Uterus (tissue), 4 donors: ENCODE measurements at regions of chr14 and their contacts with region 1.

Region 1: DNA sequence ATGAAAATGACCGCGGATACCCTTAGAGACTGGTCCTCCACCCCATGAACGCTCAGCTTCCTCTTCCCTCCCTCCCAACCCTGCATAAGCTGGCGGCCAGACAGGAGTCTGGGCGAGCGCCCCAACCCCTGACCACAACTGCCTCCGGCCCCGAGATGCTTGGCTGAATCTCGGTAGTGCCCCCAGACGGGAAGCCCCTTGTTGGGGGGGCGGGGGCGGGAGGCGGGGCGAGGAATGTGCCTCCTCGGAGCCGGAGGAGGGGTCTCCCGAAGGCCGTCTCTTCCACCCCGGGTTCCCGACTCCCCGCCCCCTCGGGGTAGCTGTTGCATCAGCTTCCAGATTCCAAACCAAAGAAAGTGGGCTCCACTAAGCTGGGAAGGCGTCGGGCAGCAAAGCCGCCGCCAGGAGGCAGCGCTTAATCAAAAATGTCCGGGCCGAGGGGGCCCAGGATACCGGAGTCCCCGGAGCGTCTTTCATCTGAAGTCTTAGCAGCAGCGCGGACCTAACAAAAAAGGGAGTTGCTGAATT is 7.1 kb upstream of the MRPL52 start:
- DNase-seq: peak; percentile 86 to 91
- H3K4me3 ChIP-seq: peak overlapping the region; percentile 36 to 39
- H3K27ac ChIP-seq: peak overlapping the region; percentile 75 to 76
- H3K4me1 ChIP-seq: peaks cover 0 to 12% of the 10 kb centered on the region in 2 donors
- H3K27me3 ChIP-seq: no peaks in the 10 kb centered on the region
- CTCF ChIP-seq: peak; percentile 86 to 93 (median 90)
- POLR2A ChIP-seq: no peak

Region 2: GRCh38 chr14:22721213-22721612 is 101.4 kb before region 1 on chr14:
- intact Hi-C with region 1: no loop called
- DNase-seq: no peak
- H3K4me3 ChIP-seq: no peak overlapping the region
- H3K27ac ChIP-seq: no peak overlapping the region
- H3K4me1 ChIP-seq: no peaks in the 10 kb centered on the region
- H3K27me3 ChIP-seq: no peaks in the 10 kb centered on the region
- CTCF ChIP-seq: no peak
- POLR2A ChIP-seq: no peak

Region 3: DNA sequence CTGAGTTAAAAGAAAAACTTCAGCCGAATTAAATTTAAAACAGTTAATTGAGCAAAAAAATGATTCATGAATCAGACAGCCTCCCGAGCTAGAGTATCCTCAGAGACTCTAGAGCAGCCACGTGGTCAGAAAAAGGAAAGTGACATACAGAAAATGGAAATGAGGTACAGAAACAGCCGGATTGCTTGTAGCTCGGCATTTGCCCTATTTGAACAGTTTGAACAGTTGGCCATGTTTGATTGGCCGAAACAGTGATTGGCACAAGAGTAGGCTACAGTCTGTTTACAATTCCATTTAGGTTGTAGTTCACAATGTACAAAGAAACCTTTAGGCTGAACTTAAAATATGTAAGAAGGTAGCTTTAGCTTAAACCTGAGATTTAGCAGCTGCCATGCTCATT is 69.0 kb before region 1 on chr14:
- intact Hi-C with region 1: no loop called
- DNase-seq: no peak
- H3K4me3 ChIP-seq: no peak overlapping the region
- H3K27ac ChIP-seq: no peak overlapping the region
- H3K4me1 ChIP-seq: no peaks in the 10 kb centered on the region
- H3K27me3 ChIP-seq: no peaks in the 10 kb centered on the region
- CTCF ChIP-seq: no peak
- POLR2A ChIP-seq: no peak

Region 4: GRCh38 chr14:22852940-22853767 is 30.5 kb after region 1 on chr14:
- intact Hi-C with region 1: loop called (anchors 5 kb)
- DNase-seq: peak; percentile 93 to 94
- H3K4me3 ChIP-seq: peak overlapping the region; percentile 25 to 26
- H3K27ac ChIP-seq: peak overlapping the region; percentile 96 to 100
- H3K4me1 ChIP-seq: peaks cover 17 to 34% of the 10 kb centered on the region in 2 donors
- H3K27me3 ChIP-seq: no peaks in the 10 kb centered on the region
- CTCF ChIP-seq: peak; percentile 68 to 99 (median 97)
- POLR2A ChIP-seq: peak in 1 of 2 donors; percentile 39